CD14-positive monocyte (primary cell): ENCODE measurements at regions of chr11 and their contacts with region 1.

Region 1: DNA sequence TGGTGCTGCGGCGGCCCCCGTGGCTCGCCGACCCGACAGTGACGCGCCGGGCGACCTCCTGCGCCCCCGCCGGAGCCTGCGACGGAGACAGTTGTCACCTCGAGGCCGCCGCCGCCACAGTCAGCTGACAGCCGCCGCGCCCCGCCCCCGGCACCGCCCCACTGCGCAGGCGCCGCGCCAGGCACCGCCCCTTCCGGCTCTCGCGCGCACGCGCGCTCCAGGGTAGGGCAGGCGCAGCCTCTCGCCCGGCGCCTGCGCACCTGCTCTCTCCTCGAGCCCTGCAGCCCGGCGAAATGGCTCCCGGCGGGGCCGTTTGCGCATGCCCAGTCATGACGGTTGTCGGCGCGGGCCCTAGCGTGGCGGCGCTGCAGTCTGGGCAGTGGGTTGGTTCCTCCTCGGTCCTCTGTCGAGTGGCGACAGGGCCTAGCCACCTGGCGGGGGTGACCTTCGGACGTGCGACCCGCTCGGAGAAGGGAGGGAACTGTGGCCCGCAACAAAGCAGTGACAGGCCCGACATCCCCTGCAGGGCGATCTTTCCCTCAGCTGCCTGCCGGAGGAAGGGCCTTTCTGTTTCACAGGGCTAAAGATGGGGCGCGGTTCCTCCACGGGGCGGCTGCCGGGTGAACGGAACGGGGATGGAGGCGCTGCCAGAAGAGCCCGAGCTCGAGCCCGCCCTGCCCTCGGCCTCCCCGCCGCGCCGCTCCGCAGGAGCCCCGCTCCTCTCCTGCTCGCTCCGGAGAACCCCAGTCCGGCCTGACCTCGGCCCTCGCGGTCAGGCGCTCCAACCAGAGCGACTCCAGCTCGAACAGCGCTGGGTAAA is at the start of gene TOLLIP:
- DNase-seq: peak; percentile 94 to 95 (median 94)
- H3K4me3 ChIP-seq: peak within 1 kb of the TSS; percentile 76 to 87 (median 81)
- H3K4me3 Mint-ChIP-seq: peak within 1 kb of the TSS; percentile 76 to 83
- H3K27ac ChIP-seq: peak within 1 kb of the TSS; percentile 92
- H3K27ac Mint-ChIP-seq: peak within 1 kb of the TSS; percentile 89 to 97 (median 94)
- H3K4me1 ChIP-seq: peaks cover 51 to 53% of the 10 kb centered on the region in 2 donors
- H3K4me1 Mint-ChIP-seq: peaks cover 49% of the 10 kb centered on the region
- H3K27me3 ChIP-seq: no peaks in the 10 kb centered on the region
- H3K27me3 Mint-ChIP-seq: peaks cover 0 to 4% (median 2%) of the 10 kb centered on the region in 3 donors
- CTCF ChIP-seq: no peak
- polyA plus RNA-seq, gene TOLLIP: 67.9 to 72.1 (median 71.7) TPM

Region 2: DNA sequence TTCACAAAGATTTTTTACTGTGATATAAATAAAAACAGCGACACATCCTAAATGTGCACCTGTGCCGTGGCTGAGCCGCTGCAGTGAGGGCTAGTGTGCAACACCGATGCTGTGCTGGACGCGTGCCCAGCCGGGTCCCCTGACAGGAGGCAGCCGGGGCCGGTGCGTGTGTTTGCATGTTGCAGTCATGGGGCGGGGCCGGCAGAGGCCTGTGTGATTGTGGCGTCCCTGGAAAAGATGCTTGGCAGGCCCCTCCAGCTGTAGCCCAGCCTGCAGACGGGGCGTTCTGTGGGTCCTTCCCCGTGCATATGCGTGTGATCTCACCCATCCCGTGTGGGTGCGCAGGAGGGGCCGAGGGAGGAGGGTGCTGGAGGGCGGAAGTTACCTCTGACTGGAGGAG is 303.8 kb before region 1 on chr11:
- intact Hi-C with region 1: no loop called
- DNase-seq: no peak
- H3K4me3 ChIP-seq: no peak overlapping the region
- H3K4me3 Mint-ChIP-seq: no peak overlapping the region
- H3K27ac ChIP-seq: no peak overlapping the region
- H3K27ac Mint-ChIP-seq: no peak overlapping the region
- H3K4me1 ChIP-seq: no peaks in the 10 kb centered on the region
- H3K4me1 Mint-ChIP-seq: no peaks in the 10 kb centered on the region
- H3K27me3 ChIP-seq: no peaks in the 10 kb centered on the region
- H3K27me3 Mint-ChIP-seq: peaks cover 0 to 2% (median 0%) of the 10 kb centered on the region in 3 donors
- CTCF ChIP-seq: no peak

Region 3: DNA sequence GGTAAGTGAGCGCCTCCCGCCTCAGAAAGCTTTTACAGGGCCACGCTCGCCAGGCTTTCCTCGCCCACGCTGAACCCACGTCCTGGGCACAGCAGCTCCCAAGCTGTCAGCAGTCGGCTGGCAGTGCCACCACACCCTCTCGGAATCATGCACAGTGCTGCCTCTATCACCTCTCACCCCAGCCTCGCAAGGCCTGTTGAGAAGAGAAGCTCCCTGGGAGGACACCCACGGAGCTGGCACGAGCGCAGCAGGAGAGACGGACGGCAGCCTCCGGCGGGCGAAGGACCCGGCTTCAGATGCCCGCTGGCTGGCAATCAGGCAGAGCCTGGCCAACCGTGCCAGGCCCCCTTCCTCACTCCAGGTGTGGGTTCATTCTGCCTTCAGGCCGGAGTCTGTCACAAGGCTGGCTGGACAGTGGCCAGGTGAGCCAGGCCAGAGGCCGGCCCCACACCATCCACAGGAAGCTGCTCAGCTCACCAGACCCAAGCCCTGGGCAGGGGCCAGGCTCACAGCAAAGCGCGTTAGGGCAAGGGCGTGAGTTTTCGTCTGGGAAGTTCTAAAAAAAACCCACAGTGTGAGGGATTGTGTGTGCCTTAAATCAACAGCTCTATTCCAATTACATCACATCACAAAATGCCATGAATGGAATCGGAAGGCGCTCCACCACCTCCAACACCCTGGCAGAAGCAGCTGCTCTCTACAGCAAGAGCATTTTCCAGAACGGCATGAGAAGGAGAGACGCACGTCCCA is 33.5 kb before region 1 on chr11:
- intact Hi-C with region 1: no loop called
- DNase-seq: no peak
- H3K4me3 ChIP-seq: no peak overlapping the region
- H3K4me3 Mint-ChIP-seq: no peak overlapping the region
- H3K27ac ChIP-seq: no peak overlapping the region
- H3K27ac Mint-ChIP-seq: no peak overlapping the region
- H3K4me1 ChIP-seq: no peaks in the 10 kb centered on the region
- H3K4me1 Mint-ChIP-seq: no peaks in the 10 kb centered on the region
- H3K27me3 ChIP-seq: no peaks in the 10 kb centered on the region
- H3K27me3 Mint-ChIP-seq: peaks cover 0 to 3% (median 0%) of the 10 kb centered on the region in 3 donors
- CTCF ChIP-seq: no peak

Region 4: DNA sequence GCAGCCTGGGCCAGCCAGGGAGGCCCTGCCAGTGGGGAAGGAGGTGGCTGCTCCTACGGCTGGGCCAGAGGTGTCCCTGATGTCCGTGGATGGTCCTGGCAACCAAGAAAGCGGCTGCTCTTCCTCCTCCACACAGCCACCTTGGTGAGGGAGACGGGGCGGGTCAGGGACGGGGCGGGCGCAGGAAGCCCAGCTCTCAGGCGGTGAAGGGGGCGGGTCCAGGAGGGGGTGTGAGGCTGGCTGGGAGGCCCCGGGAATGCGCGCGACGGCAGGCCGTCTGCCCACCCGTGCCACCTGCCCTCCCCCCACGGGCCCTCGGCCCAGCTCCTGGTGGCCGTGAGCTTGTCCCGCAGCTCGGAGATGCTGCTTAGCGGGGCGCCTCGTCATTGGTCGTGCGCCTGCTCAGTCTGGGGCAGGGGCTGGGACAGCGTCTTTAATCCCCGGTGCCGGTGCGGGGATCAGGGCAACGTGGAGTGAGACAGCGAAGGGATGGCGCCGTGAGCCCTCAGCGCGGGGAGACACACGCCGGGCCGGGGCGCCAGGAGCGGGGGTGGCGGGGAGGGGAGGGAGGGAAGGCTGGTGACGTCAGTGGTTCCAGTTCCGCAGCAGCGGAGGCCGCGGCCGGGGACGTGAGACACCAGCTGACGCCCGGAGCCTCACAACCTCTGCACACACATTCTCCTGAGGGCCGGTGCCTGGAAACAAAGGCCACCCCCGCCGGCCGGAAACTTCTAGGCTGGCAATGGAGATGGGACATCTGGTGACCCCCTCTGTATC is 73.3 kb after region 1 on chr11:
- intact Hi-C with region 1: loop called (anchors 2 to 5 kb)
- DNase-seq: peak; percentile 85 to 88 (median 85)
- H3K4me3 ChIP-seq: peak overlapping the region; percentile 29 to 72 (median 49)
- H3K4me3 Mint-ChIP-seq: peak overlapping the region; percentile 74 to 87
- H3K27ac ChIP-seq: peak overlapping the region in 1 of 2 donors; percentile 73
- H3K27ac Mint-ChIP-seq: peak overlapping the region in 5 of 7 donors; percentile 72 to 91 (median 80)
- H3K4me1 ChIP-seq: peaks cover 11 to 13% of the 10 kb centered on the region in 2 donors
- H3K4me1 Mint-ChIP-seq: peaks cover 8% of the 10 kb centered on the region
- H3K27me3 ChIP-seq: peaks cover 5 to 44% of the 10 kb centered on the region in 2 donors
- H3K27me3 Mint-ChIP-seq: peaks cover 58 to 72% (median 61%) of the 10 kb centered on the region in 3 donors
- CTCF ChIP-seq: no peak

Region 5: GRCh38 chr11:1486114-1486825 is 176.6 kb after region 1 on chr11 and contains the start of gene MOB2:
- intact Hi-C with region 1: no loop called
- DNase-seq: no peak
- H3K4me3 ChIP-seq: no peak within 1 kb of the TSS
- H3K4me3 Mint-ChIP-seq: no peak within 1 kb of the TSS
- H3K27ac ChIP-seq: no peak within 1 kb of the TSS
- H3K27ac Mint-ChIP-seq: peak within 1 kb of the TSS in 3 of 7 donors; percentile 45 to 63 (median 61)
- H3K4me1 ChIP-seq: no peaks in the 10 kb centered on the region
- H3K4me1 Mint-ChIP-seq: peaks cover 2% of the 10 kb centered on the region
- H3K27me3 ChIP-seq: no peaks in the 10 kb centered on the region
- H3K27me3 Mint-ChIP-seq: peaks cover 0 to 2% (median 0%) of the 10 kb centered on the region in 3 donors
- CTCF ChIP-seq: no peak
- polyA plus RNA-seq, gene MOB2: 22.1 to 44.1 (median 22.5) TPM